CD8-positive, alpha-beta T cell (primary cell): ENCODE measurements at regions of chr5 and their contacts with region 1.

Region 1: GRCh38 chr5:61658592-61659008 is 326.5 kb downstream of the ZSWIM6 start:
- DNase-seq: peak; percentile 64 to 92 (median 78)
- ATAC-seq: peak; percentile 59
- H3K4me3 ChIP-seq: no peak overlapping the region
- H3K4me3 Mint-ChIP-seq: no peak overlapping the region
- H3K27ac ChIP-seq: no peak overlapping the region
- H3K27ac Mint-ChIP-seq: no peak overlapping the region
- H3K4me1 ChIP-seq: no peaks in the 10 kb centered on the region
- H3K4me1 Mint-ChIP-seq: no peaks in the 10 kb centered on the region
- H3K27me3 ChIP-seq: peaks cover 0 to 2% of the 10 kb centered on the region in 2 experiments
- H3K27me3 Mint-ChIP-seq: peaks cover 22% of the 10 kb centered on the region
- CTCF ChIP-seq: peak; percentile 93

Region 2: DNA sequence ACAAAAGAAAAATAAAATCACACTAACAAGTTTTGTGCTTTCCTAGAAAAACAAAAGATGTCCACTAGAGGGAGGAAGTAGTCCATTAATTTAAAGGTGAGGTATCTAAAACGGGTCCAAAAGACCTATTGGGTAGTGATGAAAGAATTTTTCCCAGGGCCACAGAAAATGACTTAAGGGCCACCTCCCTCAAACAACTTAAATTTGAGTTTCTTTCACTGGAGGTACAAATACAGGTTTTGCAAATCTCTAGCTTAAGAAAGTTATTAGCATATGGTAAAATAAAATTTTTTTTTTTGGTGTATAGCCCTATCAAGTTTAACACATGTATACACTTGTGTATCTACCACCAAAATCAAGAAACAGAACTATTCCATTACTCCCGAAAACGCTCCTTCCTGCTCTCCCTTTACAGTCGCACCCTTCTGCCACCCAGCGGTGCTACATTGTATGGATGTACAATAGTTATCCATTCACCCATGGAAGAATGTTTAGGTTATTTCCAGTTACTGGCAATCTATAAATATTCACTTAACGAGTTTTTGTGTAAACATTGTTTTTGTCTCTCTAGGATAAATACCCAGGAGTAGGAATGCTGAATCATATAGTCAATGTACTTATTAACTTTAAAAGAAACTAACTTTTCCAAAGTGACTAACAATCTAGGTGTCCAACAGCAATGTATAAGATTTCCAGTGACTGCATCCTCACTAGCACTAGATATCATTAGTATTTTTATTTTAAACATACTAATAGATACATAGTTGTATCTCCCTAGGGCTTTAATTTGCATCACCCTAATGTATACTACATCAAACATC is 980.5 kb before region 1 on chr5:
- CTCF ChIA-PET with region 1: interaction called, 6 read pairs
- POLR2A ChIA-PET with region 1: no interaction called
- intact Hi-C with region 1: loop called (anchors 2 kb)
- DNase-seq: peak in 2 of 9 experiments; percentile 34 to 51
- ATAC-seq: no peak
- H3K4me3 ChIP-seq: no peak overlapping the region
- H3K4me3 Mint-ChIP-seq: no peak overlapping the region
- H3K27ac ChIP-seq: no peak overlapping the region
- H3K27ac Mint-ChIP-seq: no peak overlapping the region
- H3K4me1 ChIP-seq: no peaks in the 10 kb centered on the region
- H3K4me1 Mint-ChIP-seq: no peaks in the 10 kb centered on the region
- H3K27me3 ChIP-seq: no peaks in the 10 kb centered on the region
- H3K27me3 Mint-ChIP-seq: no peaks in the 10 kb centered on the region
- CTCF ChIP-seq: peak; percentile 51

Region 3: DNA sequence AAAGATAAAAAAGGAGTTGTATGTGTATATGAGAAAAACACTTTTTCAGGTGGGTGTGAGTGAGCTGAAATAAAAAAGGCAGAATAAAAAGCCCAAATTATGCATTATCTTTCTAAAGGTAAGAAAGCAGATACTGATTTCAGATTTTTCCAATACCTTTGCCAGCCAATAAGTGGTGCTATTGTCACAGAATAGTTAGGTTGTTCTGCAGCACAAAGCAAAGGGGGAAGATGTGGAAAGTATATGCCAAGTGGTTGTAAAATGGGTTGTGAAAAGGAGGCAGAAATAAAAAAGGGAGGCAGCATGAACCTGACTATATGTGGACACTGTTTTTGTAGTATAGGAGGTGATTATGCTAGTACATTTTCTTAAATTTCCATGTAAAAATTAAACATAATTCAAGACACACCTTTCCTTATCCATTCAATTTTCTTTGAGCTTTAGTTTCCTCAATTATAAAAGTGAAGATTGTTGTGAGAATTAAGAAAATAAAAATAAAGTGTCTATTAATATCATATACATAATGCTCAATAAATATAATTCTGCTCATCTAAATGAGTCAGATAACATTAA is 603.1 kb before region 1 on chr5:
- CTCF ChIA-PET with region 1: interaction called, 49 read pairs
- POLR2A ChIA-PET with region 1: no interaction called
- intact Hi-C with region 1: loop called (anchors 1 kb)
- DNase-seq: peak in 2 of 9 experiments; percentile 29 to 49
- ATAC-seq: no peak
- H3K4me3 ChIP-seq: no peak overlapping the region
- H3K4me3 Mint-ChIP-seq: no peak overlapping the region
- H3K27ac ChIP-seq: no peak overlapping the region
- H3K27ac Mint-ChIP-seq: no peak overlapping the region
- H3K4me1 ChIP-seq: no peaks in the 10 kb centered on the region
- H3K4me1 Mint-ChIP-seq: no peaks in the 10 kb centered on the region
- H3K27me3 ChIP-seq: no peaks in the 10 kb centered on the region
- H3K27me3 Mint-ChIP-seq: no peaks in the 10 kb centered on the region
- CTCF ChIP-seq: peak; percentile 72

Region 4: DNA sequence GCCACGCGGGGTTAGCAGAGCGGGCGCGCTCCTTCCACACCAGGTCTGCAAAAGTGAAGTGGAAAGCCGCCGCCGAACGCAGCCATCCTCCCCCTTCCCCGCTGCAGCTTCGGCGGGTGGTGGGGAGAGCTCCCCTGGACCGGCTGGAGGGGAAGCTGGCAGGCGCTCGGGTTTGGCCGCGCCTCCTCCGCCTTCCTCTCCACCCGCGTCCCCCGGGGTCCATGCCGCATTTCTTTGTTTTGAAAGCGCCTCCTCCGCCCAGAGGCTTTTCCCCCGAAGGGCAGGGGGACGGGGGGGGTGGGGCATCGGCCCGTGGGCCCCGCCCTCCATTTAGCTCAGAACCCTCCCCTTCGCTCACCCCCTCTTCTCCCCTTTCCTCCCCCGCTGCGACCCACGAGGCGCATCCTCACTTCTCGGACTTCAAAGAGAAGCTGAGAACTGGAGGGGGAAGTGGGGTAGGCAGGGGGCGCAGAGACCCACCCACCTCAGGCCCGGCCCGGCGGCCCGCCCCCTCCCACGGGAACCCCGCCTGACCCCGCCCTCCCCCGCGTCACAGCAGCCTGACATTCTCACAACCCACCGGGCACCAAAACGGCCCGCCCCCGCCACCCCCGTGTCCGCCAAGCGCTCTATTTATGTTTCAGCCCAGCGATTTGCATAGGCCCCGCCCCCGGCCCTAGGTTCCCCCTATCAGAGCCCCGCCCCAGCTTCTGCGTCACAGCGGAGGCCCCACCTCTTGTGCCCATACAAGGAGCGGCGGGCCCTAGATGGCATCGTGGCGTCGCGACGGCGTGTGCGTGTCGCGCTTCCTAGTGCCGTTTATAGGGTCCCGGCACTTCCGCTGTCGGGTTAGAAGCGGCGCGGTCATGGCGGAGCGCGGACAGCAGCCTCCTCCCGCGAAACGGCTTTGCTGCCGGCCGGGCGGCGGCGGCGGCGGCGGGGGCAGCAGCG is 326.9 kb before region 1 on chr5 and contains the start of gene ZSWIM6:
- CTCF ChIA-PET with region 1: interaction called, 10 read pairs
- POLR2A ChIA-PET with region 1: no interaction called
- intact Hi-C with region 1: loop called in 1 of 2 experiments (anchors 10 kb)
- DNase-seq: peak; percentile 98 to 100 (median 99)
- ATAC-seq: peak; percentile 82
- H3K4me3 ChIP-seq: peak within 1 kb of the TSS; percentile 93 to 94
- H3K4me3 Mint-ChIP-seq: peak within 1 kb of the TSS; percentile 95
- H3K27ac ChIP-seq: peak within 1 kb of the TSS; percentile 84 to 93
- H3K27ac Mint-ChIP-seq: peak within 1 kb of the TSS; percentile 97
- H3K4me1 ChIP-seq: peaks cover 20% of the 10 kb centered on the region
- H3K4me1 Mint-ChIP-seq: peaks cover 51% of the 10 kb centered on the region
- H3K27me3 ChIP-seq: no peaks in the 10 kb centered on the region
- H3K27me3 Mint-ChIP-seq: peaks cover 14% of the 10 kb centered on the region
- CTCF ChIP-seq: no peak
- total RNA-seq, gene ZSWIM6: 3.9 to 4.1 TPM

Region 5: GRCh38 chr5:61673007-61673735 is 14.6 kb after region 1 on chr5:
- CTCF ChIA-PET with region 1: interaction called, 16 read pairs
- POLR2A ChIA-PET with region 1: no interaction called
- intact Hi-C with region 1: no loop called
- DNase-seq: no peak
- ATAC-seq: no peak
- H3K4me3 ChIP-seq: no peak overlapping the region
- H3K4me3 Mint-ChIP-seq: no peak overlapping the region
- H3K27ac ChIP-seq: no peak overlapping the region
- H3K27ac Mint-ChIP-seq: no peak overlapping the region
- H3K4me1 ChIP-seq: no peaks in the 10 kb centered on the region
- H3K4me1 Mint-ChIP-seq: no peaks in the 10 kb centered on the region
- H3K27me3 ChIP-seq: no peaks in the 10 kb centered on the region
- H3K27me3 Mint-ChIP-seq: peaks cover 11% of the 10 kb centered on the region
- CTCF ChIP-seq: no peak